A673 (cell line): ENCODE measurements at regions of chr12 and their contacts with region 1.

Region 1: GRCh38 chr12:121697098-121697698 is 15.4 kb upstream of the TMEM120B start:
- DNase-seq: peak; percentile 72
- H3K4me3 ChIP-seq: no peak overlapping the region
- H3K27ac ChIP-seq: no peak overlapping the region
- H3K4me1 ChIP-seq: no peaks in the 10 kb centered on the region
- H3K27me3 ChIP-seq: no peaks in the 10 kb centered on the region
- CTCF ChIP-seq: peak; percentile 66

Region 2: GRCh38 chr12:121773011-121773777 is 76.0 kb after region 1 on chr12:
- CTCF ChIA-PET with region 1: interaction called, 5 read pairs
- POLR2A ChIA-PET with region 1: no interaction called
- intact Hi-C with region 1: loop called (anchors 1 kb)
- DNase-seq: peak; percentile 70
- H3K4me3 ChIP-seq: no peak overlapping the region
- H3K27ac ChIP-seq: no peak overlapping the region
- H3K4me1 ChIP-seq: no peaks in the 10 kb centered on the region
- H3K27me3 ChIP-seq: no peaks in the 10 kb centered on the region
- CTCF ChIP-seq: peak; percentile 88

Region 3: GRCh38 chr12:121804417-121805178 is 107.4 kb after region 1 on chr12:
- CTCF ChIA-PET with region 1: no interaction called
- POLR2A ChIA-PET with region 1: no interaction called
- intact Hi-C with region 1: no loop called
- DNase-seq: peak; percentile 57
- H3K4me3 ChIP-seq: peak overlapping the region; percentile 81
- H3K27ac ChIP-seq: peak overlapping the region; percentile 100
- H3K4me1 ChIP-seq: peaks cover 16% of the 10 kb centered on the region
- H3K27me3 ChIP-seq: no peaks in the 10 kb centered on the region
- CTCF ChIP-seq: no peak